ENCODE measurements at regions of chr12 and their contacts with region 1.

Region 1: GRCh38 chr12:112382232-112382796 is at the start of gene HECTD4:
- DNase-seq: peak; percentile 99
- H3K4me3 ChIP-seq: peak within 1 kb of the TSS; percentile 86
- H3K27ac ChIP-seq: peak within 1 kb of the TSS; percentile 74
- H3K4me1 ChIP-seq: peaks cover 6% of the 10 kb centered on the region
- H3K27me3 ChIP-seq: no peaks in the 10 kb centered on the region
- CTCF ChIP-seq: no peak
- total RNA-seq, gene HECTD4: 39.6 to 41.7 TPM

Region 2: DNA sequence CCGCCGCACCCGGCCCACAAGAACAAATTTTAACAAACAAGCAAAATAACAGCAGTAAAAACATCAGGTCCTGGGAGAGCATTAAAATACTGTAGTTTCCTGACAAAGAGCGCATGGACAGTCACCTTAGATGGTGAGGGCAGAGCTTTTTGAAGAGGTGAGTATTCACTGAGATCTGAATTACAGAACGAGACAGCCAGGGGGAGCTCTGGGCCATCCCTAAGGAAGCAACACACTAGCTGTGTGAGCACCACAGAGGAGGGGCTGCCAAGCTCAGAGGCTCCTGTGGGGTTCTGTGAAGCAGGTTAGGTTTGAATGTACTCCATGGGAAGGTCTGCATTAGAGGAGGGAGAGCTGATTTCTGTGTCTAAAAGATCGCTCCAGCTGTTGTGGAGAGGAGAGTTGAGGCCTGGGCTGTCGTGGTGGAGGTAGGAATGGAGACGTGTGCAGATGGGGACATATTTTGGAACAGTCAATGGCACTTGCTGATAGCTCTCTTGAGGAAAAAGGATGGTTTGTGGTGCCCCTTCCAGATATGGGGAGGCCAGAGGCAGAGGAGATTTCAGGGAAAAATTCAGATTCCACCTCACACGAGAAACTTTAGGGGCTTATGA is 184.1 kb before region 1 on chr12:
- intact Hi-C with region 1: loop called (anchors 5 kb)
- DNase-seq: peak; percentile 48
- H3K4me3 ChIP-seq: no peak overlapping the region
- H3K27ac ChIP-seq: no peak overlapping the region
- H3K4me1 ChIP-seq: no peaks in the 10 kb centered on the region
- H3K27me3 ChIP-seq: no peaks in the 10 kb centered on the region
- CTCF ChIP-seq: peak; percentile 20

Region 3: DNA sequence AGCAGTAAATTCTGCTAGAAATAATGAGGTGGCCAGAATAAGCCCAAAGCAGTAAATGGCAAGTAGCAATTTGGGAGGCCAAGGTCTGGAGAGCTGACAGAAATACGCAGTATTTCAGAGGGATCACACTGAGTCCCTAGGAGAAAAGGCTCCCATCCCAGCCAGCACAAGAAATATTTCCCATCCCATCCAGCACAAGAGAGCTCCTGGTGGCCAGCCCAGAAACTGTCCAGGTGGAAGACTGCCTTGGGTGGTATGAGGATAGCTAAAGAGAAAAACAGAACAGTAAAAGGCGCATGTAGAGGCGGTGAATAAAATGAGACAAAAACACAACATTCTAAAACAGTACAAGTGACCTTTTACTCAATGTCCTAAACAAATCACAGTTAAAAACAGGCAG is 120.8 kb before region 1 on chr12:
- intact Hi-C with region 1: loop called (anchors 10 kb)
- DNase-seq: no peak
- H3K4me3 ChIP-seq: no peak overlapping the region
- H3K27ac ChIP-seq: no peak overlapping the region
- H3K4me1 ChIP-seq: no peaks in the 10 kb centered on the region
- H3K27me3 ChIP-seq: no peaks in the 10 kb centered on the region
- CTCF ChIP-seq: no peak

Region 4: DNA sequence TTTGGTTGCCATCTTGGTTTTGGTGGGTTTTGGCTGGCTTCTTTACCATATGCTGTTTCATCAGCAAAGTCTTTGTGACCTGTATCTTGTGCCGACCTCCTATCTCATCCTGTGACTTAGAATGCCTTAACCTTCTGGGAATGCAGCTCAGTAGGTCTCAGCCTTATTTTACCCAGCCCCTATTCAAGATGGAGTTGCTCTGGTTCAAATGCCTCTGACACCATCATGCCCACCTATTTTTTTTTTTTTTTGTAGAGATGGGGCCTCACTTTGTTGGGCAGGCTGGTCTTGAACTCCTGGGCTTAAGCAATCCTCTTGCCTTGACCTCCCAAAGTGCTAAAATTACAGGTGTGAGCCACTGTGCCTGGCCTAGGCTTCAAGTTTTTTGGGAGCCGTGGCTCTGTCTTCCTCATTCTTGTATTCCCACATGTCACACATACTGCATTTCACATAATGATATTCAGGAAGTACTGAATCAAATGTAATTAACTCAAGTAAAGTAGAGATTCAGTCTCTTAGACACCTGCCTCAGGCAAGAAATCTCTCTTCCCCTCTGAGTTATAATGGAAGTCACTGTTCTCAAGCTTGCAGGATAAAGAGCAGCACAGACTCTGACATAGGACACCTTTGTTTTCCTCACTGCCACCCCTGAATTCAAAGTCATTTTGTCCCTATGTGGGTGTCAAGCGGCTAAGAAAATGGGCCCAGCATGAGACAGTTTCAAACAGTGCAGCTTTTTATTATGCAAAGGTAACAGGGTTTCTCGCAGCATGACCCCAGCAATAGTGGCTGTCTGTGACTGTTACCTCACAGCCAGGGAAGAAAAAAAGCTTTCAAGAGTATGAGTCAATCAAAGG is 195.4 kb after region 1 on chr12:
- intact Hi-C with region 1: no loop called
- DNase-seq: no peak
- H3K4me3 ChIP-seq: no peak overlapping the region
- H3K27ac ChIP-seq: no peak overlapping the region
- H3K4me1 ChIP-seq: no peaks in the 10 kb centered on the region
- H3K27me3 ChIP-seq: peaks cover 5% of the 10 kb centered on the region
- CTCF ChIP-seq: no peak

Region 5: GRCh38 chr12:112891093-112892024 is 509.0 kb after region 1 on chr12:
- intact Hi-C with region 1: no loop called
- DNase-seq: no peak
- H3K4me3 ChIP-seq: no peak overlapping the region
- H3K27ac ChIP-seq: no peak overlapping the region
- H3K4me1 ChIP-seq: no peaks in the 10 kb centered on the region
- H3K27me3 ChIP-seq: no peaks in the 10 kb centered on the region
- CTCF ChIP-seq: no peak